ENCODE measurements at regions of chr9 and their contacts with region 1.

Region 1: GRCh38 chr9:69745716-69746437 is 13.9 kb downstream of the PTAR1 start:
- DNase-seq: peak in 1 of 2 experiments; percentile 53
- ATAC-seq: peak; percentile 89 to 91; a peak in 5 of 6 replicates
- H3K4me3 ChIP-seq: no peak overlapping the region
- H3K27ac ChIP-seq: peak overlapping the region; percentile 23 to 59; a peak in 5 of 6 replicates
- H3K4me1 ChIP-seq: peaks cover 38% of the 10 kb centered on the region
- CTCF ChIP-seq: peak; percentile 47
- EP300 ChIP-seq: no peak
- POLR2A ChIP-seq: no peak
- RAD21 ChIP-seq: peak; percentile 56 to 61

Region 2: GRCh38 chr9:69731348-69731747 is 14.5 kb before region 1 on chr9:
- CTCF ChIA-PET with region 1: interaction called, 23 read pairs
- POLR2A ChIA-PET with region 1: no interaction called
- DNase-seq: no peak
- ATAC-seq: no peak
- H3K4me3 ChIP-seq: no peak overlapping the region
- H3K27ac ChIP-seq: no peak overlapping the region
- H3K4me1 ChIP-seq: no peaks in the 10 kb centered on the region
- CTCF ChIP-seq: no peak
- EP300 ChIP-seq: no peak
- POLR2A ChIP-seq: no peak
- RAD21 ChIP-seq: no peak

Region 3: DNA sequence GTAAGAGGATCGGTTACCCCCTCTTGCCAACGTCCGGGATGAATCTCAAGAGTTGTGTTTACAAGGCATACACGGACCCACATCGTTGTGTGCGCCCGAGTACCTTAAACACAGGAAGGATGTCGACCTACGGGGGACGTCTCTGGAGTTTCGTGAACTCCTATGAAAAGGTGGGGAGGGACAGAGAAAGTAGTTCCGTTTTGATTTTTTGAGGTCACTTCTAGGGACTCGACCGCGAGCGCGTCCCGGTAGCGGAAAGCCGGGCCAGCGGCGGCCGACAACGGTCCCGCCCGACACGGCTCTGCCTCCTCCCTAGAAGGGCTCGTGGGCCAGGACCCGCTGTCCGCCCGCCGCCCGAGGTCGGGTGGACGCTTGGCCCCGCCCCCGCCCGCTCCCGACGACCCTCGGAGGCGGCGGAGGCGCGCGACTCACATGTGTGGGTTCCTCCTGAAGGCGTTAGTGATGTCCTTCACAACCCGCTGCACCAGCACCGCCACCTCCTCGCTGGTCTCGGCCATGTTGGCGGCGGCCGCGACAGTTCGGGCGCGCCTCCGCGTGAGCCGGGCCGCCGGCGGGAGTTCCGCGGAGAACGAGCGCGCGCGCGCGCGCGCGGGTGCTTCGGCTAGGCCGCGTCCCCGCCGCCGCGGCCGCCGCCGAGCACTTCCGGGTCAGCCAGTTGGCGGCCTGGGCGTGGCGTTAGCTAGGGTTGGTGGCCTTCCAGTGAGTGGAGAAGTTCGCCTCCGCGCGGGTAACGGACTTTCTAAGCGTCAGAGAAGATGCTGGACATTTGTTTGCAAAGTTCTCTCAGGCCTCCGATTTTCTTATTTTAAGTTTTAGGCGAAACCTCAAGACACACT is 13.8 kb after region 1 on chr9 and contains the start of gene PTAR1:
- CTCF ChIA-PET with region 1: interaction called, 12 read pairs
- POLR2A ChIA-PET with region 1: no interaction called
- DNase-seq: peak; percentile 54 to 92
- ATAC-seq: peak; percentile 90 to 94
- H3K4me3 ChIP-seq: peak within 1 kb of the TSS; percentile 64
- H3K27ac ChIP-seq: peak within 1 kb of the TSS; percentile 92 to 98
- H3K4me1 ChIP-seq: peaks cover 27% of the 10 kb centered on the region
- CTCF ChIP-seq: no peak
- EP300 ChIP-seq: no peak
- POLR2A ChIP-seq: peak; percentile 86
- RAD21 ChIP-seq: no peak
- polyA plus RNA-seq, gene PTAR1: 32.4 and 34.6 TPM in 2 replicates